ENCODE measurements at regions of chr18 and their contacts with region 1.

Region 1: DNA sequence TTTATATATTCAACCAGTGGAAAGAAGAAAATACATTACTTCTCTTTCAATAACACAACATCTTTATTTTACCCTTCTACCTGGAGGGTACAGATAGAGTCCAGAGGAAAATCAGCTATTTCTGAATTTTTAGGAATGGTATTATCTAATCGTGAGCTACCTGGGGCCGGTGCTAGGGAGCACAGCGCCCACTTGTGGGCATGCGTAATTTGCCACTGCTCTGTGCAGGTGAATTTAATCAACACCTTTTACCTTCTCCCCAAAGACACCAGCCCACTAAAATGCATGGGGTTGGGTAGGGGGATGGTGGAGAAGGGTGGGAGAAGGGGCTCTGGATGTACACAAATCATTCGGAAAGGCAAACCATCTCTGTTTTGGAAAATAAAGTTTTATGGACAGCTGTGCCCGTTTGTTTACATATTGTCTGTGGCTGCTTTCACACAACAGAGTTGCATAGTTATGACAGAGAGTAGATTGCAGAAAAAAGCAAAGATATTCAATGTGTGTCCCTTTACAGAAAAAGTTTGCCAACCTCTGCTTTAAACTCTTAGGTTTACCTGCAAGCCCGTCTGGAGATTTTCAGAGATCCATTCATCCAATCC is 51.5 kb upstream of the DCC start:
- DNase-seq: peak; percentile 34
- H3K4me3 Mint-ChIP-seq: no peak overlapping the region
- H3K27ac Mint-ChIP-seq: no peak overlapping the region
- H3K4me1 Mint-ChIP-seq: no peaks in the 10 kb centered on the region
- H3K27me3 Mint-ChIP-seq: no peaks in the 10 kb centered on the region

Region 2: GRCh38 chr18:51668101-51668500 is 620.4 kb before region 1 on chr18:
- CTCF ChIA-PET with region 1: interaction called, 11 read pairs
- DNase-seq: peak; percentile 66
- H3K4me3 Mint-ChIP-seq: no peak overlapping the region
- H3K27ac Mint-ChIP-seq: no peak overlapping the region
- H3K4me1 Mint-ChIP-seq: no peaks in the 10 kb centered on the region
- H3K27me3 Mint-ChIP-seq: no peaks in the 10 kb centered on the region

Region 3: DNA sequence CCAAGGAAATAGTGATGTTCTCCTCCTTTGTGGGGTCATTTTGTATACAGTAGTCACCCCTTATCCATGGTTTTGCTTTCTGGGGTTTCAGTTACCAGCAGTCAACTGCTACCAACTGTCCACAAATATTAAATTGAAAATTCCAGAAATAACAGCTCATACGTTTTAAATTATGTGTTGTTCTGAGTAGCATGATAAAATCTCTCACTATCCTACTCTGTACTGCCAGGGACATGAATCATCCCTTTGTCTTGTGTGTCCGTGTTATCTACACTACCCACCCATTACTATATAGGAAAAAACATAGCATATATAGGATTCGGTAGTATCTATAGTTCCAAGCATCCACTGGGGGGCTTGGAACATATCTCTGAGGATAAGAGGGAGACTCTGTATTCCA is 69.4 kb before region 1 on chr18:
- CTCF ChIA-PET with region 1: no interaction called
- DNase-seq: no peak
- H3K4me3 Mint-ChIP-seq: no peak overlapping the region
- H3K27ac Mint-ChIP-seq: no peak overlapping the region
- H3K4me1 Mint-ChIP-seq: no peaks in the 10 kb centered on the region
- H3K27me3 Mint-ChIP-seq: no peaks in the 10 kb centered on the region

Region 4: DNA sequence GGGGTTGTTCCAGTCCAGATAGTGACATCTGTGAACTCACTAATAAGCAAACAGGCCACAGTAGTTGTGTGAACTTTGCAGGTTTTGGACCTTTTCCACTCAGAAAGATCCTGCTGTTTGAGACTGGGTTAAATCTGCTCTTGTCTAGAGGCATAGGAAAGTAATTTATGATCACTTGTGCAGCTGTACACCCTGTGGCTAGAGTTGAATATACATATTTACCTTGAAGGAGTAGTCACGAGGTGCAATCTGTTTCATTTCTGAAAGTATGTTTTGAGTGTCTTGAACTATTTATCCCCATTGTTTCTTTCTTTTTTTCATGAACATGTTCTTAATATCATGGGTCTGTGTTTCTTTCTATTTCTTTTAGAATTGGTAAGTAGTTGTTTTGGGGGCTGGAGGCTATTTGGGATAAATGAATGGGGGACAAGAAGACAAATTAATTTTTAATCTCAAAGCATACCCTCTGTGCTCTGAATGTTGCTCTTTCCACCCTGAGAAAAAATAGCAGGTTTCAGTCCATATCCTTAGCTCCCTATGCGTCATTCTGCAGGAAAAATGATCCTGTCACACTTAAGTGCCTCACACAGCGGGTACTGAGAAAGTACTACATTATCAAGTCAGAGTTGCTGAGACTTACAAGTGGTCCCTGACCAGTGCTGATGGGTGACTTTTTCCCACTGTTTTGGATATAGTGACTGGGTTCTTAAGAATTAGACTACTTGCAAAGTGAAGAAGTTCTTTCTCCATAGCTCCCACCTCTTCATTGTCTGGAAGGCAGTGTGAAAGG is 79.6 kb after region 1 on chr18:
- CTCF ChIA-PET with region 1: no interaction called
- DNase-seq: no peak
- H3K4me3 Mint-ChIP-seq: no peak overlapping the region
- H3K27ac Mint-ChIP-seq: no peak overlapping the region
- H3K4me1 Mint-ChIP-seq: no peaks in the 10 kb centered on the region
- H3K27me3 Mint-ChIP-seq: no peaks in the 10 kb centered on the region

Measured in activated naive CD4-positive, alpha-beta T cell treated with anti-CD3 and anti-CD28 coated beads, Interleukin-2, amount 10 ng/mL, durations not matched to agents 7 days and 5 days (primary cell).